Right lobe of liver (tissue), 6 donors: ENCODE measurements at regions of chr7 and their contacts with region 1.

Region 1: DNA sequence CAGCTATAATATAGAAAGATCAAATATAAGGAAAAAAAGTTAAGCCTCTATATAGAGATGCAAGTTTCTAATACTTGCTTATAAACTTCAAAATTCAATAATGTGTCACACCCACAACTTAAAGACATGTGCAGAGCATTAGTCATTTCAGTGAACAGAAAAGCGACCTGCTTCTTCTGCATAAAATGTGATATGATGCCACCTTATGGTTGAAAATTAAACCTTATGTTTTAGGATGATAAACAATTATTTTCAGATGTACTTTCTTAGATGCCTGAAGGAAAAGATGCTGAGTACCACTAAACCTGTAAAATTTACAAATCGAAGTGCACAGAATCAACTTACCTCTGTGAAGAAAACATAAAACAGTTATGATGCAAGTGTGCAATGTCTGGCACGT is 96.0 kb downstream of the MTERF1 start:
- DNase-seq: no peak
- ATAC-seq: peak in 3 of 4 donors; percentile 27 to 68 (median 36)
- H3K4me3 ChIP-seq: no peak overlapping the region
- H3K27ac ChIP-seq: no peak overlapping the region
- H3K4me1 ChIP-seq: no peaks in the 10 kb centered on the region
- H3K27me3 ChIP-seq: no peaks in the 10 kb centered on the region
- CTCF ChIP-seq: peak; percentile 21 to 36 (median 33)
- POLR2A ChIP-seq: no peak

Region 2: DNA sequence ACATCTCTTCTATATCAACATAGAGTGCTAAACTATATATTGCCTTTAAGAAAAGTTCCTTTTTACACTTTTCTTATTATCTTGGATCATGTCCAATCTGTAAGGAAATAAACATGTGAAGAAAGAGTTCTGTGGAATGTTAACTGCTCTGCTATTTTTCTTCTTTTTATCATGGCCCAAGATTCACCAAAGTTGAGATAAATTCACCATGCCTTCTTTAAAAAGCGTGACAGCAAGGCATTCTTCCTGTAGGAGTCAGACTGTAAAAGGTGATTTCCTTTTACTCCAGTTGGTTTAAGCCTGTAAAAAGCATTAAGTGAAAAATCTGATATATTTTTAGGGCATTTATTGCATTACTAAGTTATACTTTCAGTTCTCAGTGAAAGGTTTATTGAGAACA is 685.9 kb before region 1 on chr7:
- intact Hi-C with region 1: loop called in 1 of 2 experiments (anchors 10 kb)
- DNase-seq: no peak
- ATAC-seq: no peak
- H3K4me3 ChIP-seq: no peak overlapping the region
- H3K27ac ChIP-seq: no peak overlapping the region
- H3K4me1 ChIP-seq: no peaks in the 10 kb centered on the region
- H3K27me3 ChIP-seq: no peaks in the 10 kb centered on the region
- CTCF ChIP-seq: no peak
- POLR2A ChIP-seq: no peak

Region 3: GRCh38 chr7:91614431-91614830 is 170.0 kb before region 1 on chr7:
- intact Hi-C with region 1: no loop called
- DNase-seq: no peak
- ATAC-seq: no peak
- H3K4me3 ChIP-seq: no peak overlapping the region
- H3K27ac ChIP-seq: no peak overlapping the region
- H3K4me1 ChIP-seq: no peaks in the 10 kb centered on the region
- H3K27me3 ChIP-seq: no peaks in the 10 kb centered on the region
- CTCF ChIP-seq: no peak
- POLR2A ChIP-seq: no peak

Region 4: GRCh38 chr7:91628742-91629141 is 155.7 kb before region 1 on chr7:
- intact Hi-C with region 1: no loop called
- DNase-seq: no peak
- ATAC-seq: no peak
- H3K4me3 ChIP-seq: no peak overlapping the region
- H3K27ac ChIP-seq: no peak overlapping the region
- H3K4me1 ChIP-seq: no peaks in the 10 kb centered on the region
- H3K27me3 ChIP-seq: no peaks in the 10 kb centered on the region
- CTCF ChIP-seq: no peak
- POLR2A ChIP-seq: no peak

Region 5: DNA sequence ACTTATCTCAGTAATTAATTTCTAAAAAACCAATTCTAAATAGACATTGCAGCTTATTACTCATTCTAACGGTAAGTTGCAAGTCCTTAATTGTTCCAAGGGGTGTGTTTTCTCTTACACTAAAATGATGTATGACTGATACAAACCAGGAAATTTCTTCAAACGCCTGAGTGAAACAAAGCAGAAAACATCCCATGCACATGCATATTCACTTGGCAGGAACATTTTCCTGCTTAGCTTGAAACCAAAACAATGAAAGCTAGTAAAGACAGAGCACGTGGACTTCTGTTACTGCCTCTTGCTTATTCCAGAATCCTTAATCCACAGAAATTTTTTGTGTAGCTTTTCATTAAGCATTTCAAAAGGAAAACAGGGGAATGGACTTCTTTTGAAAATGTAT is 91.7 kb before region 1 on chr7:
- intact Hi-C with region 1: no loop called
- DNase-seq: no peak
- ATAC-seq: no peak
- H3K4me3 ChIP-seq: no peak overlapping the region
- H3K27ac ChIP-seq: no peak overlapping the region
- H3K4me1 ChIP-seq: no peaks in the 10 kb centered on the region
- H3K27me3 ChIP-seq: no peaks in the 10 kb centered on the region
- CTCF ChIP-seq: no peak
- POLR2A ChIP-seq: no peak

Region 6: DNA sequence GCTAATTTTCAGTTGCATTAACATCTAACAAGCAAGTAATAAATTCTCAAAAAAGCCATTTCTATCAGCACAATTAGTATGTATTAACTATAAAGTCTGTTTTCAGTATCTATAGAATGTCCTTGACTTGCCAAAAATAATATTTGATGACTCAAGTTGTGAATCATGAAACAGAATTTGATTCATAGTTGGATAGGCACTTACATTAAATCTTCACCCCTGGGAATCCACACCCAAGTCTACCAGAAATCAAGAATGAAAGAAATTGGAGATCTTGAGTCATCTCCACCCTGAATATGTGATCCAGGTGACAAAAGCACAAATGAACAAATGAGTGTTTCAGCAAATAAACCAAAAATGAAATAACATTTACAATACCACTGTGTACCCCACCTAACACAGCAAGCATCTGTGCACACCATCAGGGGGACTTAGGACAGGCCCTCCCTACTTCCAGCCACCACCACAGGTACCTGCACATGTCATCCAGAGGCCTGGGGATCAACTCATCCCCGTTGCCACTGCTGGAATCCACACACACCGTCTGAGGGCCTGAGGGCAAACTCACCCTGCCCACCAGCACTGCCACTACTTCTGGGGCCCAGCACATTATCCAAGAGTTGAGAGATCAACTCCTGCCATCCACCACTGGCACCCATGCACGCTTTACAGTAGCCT is 64.1 kb before region 1 on chr7:
- intact Hi-C with region 1: no loop called
- DNase-seq: no peak
- ATAC-seq: no peak
- H3K4me3 ChIP-seq: no peak overlapping the region
- H3K27ac ChIP-seq: no peak overlapping the region
- H3K4me1 ChIP-seq: no peaks in the 10 kb centered on the region
- H3K27me3 ChIP-seq: no peaks in the 10 kb centered on the region
- CTCF ChIP-seq: no peak
- POLR2A ChIP-seq: no peak